ENCODE measurements at regions of chr1 and their contacts with region 1.

Region 1: DNA sequence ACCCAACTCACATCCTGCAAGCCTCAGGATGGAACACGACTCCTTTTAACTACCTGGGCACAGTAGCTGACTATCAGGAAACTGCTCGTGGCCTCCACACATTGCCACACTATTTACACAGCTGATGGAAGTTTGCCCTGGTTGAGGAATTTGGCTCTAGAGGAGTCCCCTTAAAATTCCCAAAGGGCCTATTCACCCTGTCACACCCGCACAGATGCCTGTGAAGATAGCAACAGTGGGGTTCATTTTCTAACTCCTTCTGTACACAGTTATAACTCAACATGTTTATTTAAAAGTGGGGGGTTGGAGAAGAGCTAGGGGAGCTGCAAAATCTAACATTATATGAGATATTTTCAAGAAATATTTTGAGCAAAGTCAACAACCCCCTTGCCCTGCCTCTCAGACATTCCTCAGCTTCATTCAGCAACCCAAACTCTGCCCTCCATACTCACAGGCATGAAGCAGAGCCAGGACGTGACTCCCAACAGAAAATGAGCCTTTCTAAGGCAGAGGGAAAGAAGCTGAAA is 35.8 kb upstream of the CCN1 start:
- DNase-seq: peak; percentile 82
- H3K4me3 ChIP-seq: no peak overlapping the region
- H3K27ac ChIP-seq: peak overlapping the region; percentile 8 to 30
- H3K4me1 ChIP-seq: no peaks in the 10 kb centered on the region
- H3K27me3 ChIP-seq: no peaks in the 10 kb centered on the region
- CTCF ChIP-seq: no peak
- POLR2A ChIP-seq: no peak

Region 2: GRCh38 chr1:85570446-85571180 is 25.9 kb after region 1 on chr1:
- intact Hi-C with region 1: loop called (anchors 1 kb)
- DNase-seq: no peak
- H3K4me3 ChIP-seq: no peak overlapping the region
- H3K27ac ChIP-seq: no peak overlapping the region
- H3K4me1 ChIP-seq: no peaks in the 10 kb centered on the region
- H3K27me3 ChIP-seq: no peaks in the 10 kb centered on the region
- CTCF ChIP-seq: no peak
- POLR2A ChIP-seq: no peak